Activated naive CD4-positive, alpha-beta T cell treated with anti-CD3 and anti-CD28 coated beads, Interleukin-2, amount 10 ng/mL, durations not matched to agents 7 days and 5 days (primary cell): ENCODE measurements at regions of chr10 and their contacts with region 1.

Region 1: DNA sequence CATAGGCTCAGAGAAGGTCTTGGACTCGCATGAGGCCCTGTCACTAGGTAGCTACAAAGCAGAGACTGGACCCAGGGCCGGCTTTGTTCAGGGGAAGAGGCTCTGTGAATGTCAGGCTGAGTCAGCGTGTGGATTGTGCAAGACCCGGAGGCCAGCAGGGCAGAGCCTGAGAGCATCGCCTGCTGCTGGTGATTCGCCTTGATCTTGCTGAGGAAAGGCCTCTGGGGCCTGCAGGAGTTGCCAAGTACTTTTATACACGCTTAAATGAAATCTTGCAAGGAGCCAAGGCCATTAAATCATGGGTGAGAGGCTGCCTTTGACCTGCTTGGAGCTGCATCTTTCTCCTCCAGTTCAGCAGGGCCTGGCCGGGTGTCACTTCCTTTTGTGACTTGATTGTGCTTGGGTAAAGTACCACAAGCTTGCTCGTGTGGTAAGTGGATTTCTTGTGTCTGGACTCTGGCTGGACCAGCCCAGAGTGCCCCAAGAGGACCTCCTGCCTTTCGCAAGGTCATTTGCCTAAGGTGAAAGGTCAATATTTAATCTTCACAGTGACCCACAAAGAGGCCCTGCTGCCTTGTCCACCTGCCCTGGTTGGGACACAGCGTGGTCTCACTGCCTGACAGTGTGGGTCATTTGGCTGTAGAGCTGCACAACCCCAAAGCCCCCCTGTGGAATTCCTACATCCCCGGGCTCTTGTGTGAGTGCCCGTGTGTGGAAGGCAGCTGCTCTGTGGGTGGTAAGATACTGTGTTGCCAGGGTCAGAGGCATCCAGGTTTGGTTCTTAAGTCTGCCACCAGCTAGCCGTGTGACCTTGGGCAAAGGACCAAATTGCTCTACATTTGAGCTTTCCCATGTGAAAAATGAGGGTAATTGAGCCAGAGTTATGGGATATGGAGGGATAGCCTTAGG is 38.6 kb upstream of the SH2D4B start:
- DNase-seq: peak; percentile 57
- H3K4me3 Mint-ChIP-seq: peak overlapping the region; percentile 46
- H3K27ac Mint-ChIP-seq: peak overlapping the region; percentile 94
- H3K4me1 Mint-ChIP-seq: peaks cover 98% of the 10 kb centered on the region
- H3K27me3 Mint-ChIP-seq: no peaks in the 10 kb centered on the region

Region 2: DNA sequence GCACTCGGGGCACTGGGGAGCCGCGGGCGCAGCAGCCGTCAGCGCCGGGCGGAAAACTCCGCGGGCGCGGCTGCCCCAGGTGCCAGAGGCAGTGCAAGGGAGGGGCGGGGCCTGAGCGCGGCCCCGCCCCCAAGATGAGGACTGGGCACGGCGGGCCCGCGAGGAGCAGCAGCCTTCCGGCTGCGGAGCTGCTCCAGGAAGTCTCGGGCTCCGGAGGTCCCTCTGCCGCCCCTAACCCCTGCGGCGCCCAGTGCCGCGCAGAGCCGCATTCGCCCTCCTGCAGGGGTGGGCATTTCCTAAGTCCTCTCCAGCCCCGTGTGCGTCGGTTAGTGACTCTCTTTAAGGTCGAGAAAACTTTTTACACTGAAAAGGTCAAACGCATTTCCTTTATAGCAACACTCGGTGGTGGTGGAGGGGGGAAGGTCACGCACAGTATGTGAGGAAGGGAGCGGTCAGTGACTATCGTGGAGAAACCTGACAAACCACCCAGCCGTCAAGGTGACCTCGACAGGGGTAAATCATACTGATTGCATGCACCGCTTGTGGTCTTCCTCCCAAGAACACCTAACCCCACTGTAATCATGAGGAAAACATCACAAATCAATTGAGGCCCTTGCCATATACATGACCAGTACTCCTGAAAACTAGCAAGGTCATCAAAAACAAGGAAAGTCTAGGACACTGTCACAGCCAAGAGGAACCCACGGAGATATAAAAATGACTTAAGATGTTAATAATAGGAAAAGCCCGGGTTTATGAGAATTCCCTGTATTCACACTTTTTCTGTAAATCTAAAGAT is 293.4 kb before region 1 on chr10 and contains the start of gene ANXA11:
- CTCF ChIA-PET with region 1: no interaction called
- DNase-seq: peak; percentile 90
- H3K4me3 Mint-ChIP-seq: peak within 1 kb of the TSS; percentile 98
- H3K27ac Mint-ChIP-seq: peak within 1 kb of the TSS; percentile 91
- H3K4me1 Mint-ChIP-seq: peaks cover 44% of the 10 kb centered on the region
- H3K27me3 Mint-ChIP-seq: no peaks in the 10 kb centered on the region

Region 3: DNA sequence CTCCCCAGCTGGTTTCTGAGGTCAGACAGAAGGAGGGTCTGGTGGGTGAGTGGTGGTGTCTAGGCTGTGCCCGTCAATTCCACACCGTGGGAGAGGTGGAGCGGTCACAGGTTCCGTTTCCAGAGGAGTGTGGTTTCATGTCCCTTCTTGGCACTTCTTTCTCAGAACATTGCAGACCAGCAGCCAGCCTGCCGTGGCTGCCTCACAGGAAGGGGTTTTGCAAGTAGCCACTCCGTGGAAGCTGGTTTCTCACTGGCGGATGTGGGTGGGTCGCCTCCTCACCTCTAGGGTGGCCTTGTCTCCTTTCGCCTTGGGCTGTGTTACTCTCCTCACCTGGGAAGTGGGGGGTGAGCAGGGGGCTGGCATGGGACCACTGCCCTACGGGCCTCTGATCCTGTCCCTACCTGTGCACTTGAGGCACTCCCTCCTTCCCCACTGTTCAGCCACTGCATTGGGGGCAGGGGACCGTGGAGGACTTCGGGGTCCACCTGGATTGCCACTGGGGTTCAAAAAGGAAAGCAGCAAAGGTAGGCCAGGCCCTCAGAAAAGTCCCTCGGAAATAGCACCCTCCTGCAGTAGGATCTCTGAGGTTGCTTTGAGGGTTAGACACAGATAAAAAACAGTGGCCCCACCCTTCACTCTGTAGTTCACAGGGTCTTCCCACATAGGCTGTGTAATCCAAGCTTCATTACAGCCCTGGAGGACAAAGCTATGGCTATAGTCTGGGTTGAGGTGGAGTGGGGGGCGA is 11.1 kb before region 1 on chr10:
- CTCF ChIA-PET with region 1: interaction called, 36 read pairs
- DNase-seq: peak; percentile 82
- H3K4me3 Mint-ChIP-seq: peak overlapping the region; percentile 72
- H3K27ac Mint-ChIP-seq: peak overlapping the region; percentile 95
- H3K4me1 Mint-ChIP-seq: peaks cover 98% of the 10 kb centered on the region
- H3K27me3 Mint-ChIP-seq: no peaks in the 10 kb centered on the region

Region 4: DNA sequence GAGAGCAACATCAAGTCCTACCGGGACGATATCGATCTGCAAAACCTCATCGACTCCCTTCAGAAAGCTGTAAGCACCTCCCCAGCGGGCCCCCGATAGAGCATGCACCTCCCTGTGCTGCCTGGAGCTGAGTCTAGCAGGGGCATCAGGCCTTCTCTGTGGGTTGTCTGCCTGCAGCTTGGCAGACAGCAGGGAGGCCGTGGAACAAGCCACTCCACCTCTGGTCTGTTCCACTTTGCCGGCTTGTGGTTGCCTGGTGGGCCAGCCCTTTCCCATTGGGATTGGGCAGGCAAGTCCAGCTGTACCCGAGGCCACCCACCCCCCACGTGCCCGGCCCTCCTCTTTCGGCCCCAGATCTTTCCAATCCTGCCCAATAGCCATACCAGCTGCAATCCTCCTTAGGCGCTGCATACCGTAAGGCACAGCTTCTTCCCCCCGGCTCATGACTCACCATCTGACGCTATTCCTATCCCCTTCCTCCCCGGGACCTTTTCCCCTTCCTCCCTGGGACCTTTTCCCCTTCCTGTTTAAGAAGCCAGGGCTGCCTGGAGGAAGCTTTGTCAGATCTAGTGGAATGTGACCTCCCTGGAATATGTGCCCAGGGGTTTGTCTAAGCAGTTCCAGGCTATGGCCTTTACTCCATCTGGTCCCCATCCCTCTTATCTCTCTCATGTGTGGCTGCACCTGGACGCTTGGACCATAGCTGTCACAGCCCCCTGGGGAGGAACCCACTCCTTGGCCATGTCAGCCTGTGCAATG is 10.5 kb after region 1 on chr10:
- CTCF ChIA-PET with region 1: interaction called, 21 read pairs
- DNase-seq: no peak
- H3K4me3 Mint-ChIP-seq: no peak overlapping the region
- H3K27ac Mint-ChIP-seq: peak overlapping the region; percentile 47
- H3K4me1 Mint-ChIP-seq: peaks cover 52% of the 10 kb centered on the region
- H3K27me3 Mint-ChIP-seq: peaks cover 3% of the 10 kb centered on the region